Esophagus muscularis mucosa (tissue), 4 donors: ENCODE measurements at regions of chr10 and their contacts with region 1.

Region 1: GRCh38 chr10:114304017-114304570 is 65.0 kb downstream of the VWA2 start:
- DNase-seq: peak; percentile 96
- H3K4me3 ChIP-seq: peak overlapping the region; percentile 34 to 54 (median 40)
- H3K27ac ChIP-seq: peak overlapping the region; percentile 15 to 57 (median 20)
- H3K4me1 ChIP-seq: peaks cover 26 to 59% (median 35%) of the 10 kb centered on the region in 4 donors
- H3K27me3 ChIP-seq: peaks cover 0 to 6% (median 0%) of the 10 kb centered on the region in 4 donors
- CTCF ChIP-seq: peak; percentile 82 to 83 (median 83)
- EP300 ChIP-seq: no peak
- POLR2A ChIP-seq: no peak

Region 2: DNA sequence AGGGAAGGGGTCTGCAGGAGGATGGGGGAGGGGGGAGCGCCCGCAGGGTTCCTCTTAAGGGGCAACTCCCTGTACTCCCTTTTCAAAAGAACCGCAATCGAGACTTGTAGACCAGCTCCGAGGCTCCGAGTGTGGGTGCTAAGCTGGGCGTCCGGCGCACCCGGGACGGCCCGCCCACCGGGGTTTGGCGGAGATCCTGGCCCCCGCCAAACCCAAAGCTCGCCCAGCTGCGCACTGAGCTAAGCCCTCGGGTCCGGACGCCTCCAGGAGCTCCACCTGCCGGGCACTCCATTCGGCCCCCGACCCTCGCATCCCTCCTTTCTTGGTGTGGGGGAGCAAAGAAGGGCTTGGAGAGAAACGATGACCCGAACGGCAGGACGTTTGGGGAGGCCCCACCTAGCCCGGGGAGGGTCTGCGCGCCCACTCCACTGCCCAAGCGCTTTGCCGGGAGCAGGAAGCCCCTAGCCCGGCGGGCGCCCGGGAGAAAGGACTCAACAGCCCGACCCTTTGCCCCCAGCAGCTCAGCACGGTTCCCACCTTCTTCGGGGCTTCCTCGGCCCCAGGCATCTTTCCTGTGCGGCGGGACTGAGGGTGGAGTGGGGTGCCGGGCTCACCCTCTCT is 99.6 kb after region 1 on chr10:
- intact Hi-C with region 1: loop called (anchors 10 kb)
- DNase-seq: no peak
- H3K4me3 ChIP-seq: peak overlapping the region; percentile 65 to 71 (median 65)
- H3K27ac ChIP-seq: peak overlapping the region; percentile 71 to 78 (median 74)
- H3K4me1 ChIP-seq: peaks cover 30 to 65% (median 61%) of the 10 kb centered on the region in 4 donors
- H3K27me3 ChIP-seq: peaks cover 0 to 27% (median 3%) of the 10 kb centered on the region in 4 donors
- CTCF ChIP-seq: peak; percentile 21 to 39 (median 22)
- EP300 ChIP-seq: no peak
- POLR2A ChIP-seq: no peak

Region 3: GRCh38 chr10:114437456-114438292 is 133.6 kb after region 1 on chr10:
- intact Hi-C with region 1: loop called (anchors 5 kb)
- DNase-seq: no peak
- H3K4me3 ChIP-seq: no peak overlapping the region
- H3K27ac ChIP-seq: no peak overlapping the region
- H3K4me1 ChIP-seq: no peaks in the 10 kb centered on the region
- H3K27me3 ChIP-seq: no peaks in the 10 kb centered on the region
- CTCF ChIP-seq: peak; percentile 30 to 52 (median 31)
- EP300 ChIP-seq: no peak
- POLR2A ChIP-seq: no peak